ENCODE measurements at regions of chr14 and their contacts with region 1.

Region 1: GRCh38 chr14:63276492-63277342 is 42.0 kb downstream of the GPHB5 start:
- DNase-seq: no peak
- ATAC-seq: no peak
- H3K4me3 ChIP-seq: no peak overlapping the region
- H3K27ac ChIP-seq: no peak overlapping the region
- H3K4me1 ChIP-seq: no peaks in the 10 kb centered on the region
- H3K27me3 ChIP-seq: no peaks in the 10 kb centered on the region

Region 2: DNA sequence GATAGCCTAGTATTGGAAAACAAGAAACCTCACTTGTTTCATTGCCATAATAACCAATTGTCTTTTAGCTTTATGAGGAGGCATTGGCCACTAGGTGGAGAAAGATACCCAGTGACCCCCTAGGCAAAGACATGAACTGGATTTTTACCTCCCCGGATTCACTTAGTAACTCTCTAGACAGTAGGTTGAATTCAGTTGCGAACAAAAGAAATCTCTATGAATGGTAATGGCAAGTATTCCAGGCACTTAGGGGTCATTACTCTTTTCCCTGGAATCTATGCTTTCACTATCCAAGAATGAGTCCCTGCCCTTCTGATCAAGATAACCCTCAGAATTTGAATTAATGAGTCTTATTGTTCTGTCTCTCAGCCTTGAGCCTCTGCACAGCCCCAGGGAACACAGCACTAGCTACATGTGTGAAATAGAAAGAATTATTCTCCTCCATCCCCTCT is 101.9 kb before region 1 on chr14:
- intact Hi-C with region 1: loop called (anchors 1 to 2 kb)
- DNase-seq: no peak
- ATAC-seq: peak; percentile 77
- H3K4me3 ChIP-seq: no peak overlapping the region
- H3K27ac ChIP-seq: no peak overlapping the region
- H3K4me1 ChIP-seq: peaks cover 0 to 1% of the 10 kb centered on the region in 2 donors
- H3K27me3 ChIP-seq: no peaks in the 10 kb centered on the region

Region 3: GRCh38 chr14:63426838-63427352 is 150.2 kb after region 1 on chr14:
- intact Hi-C with region 1: no loop called
- DNase-seq: no peak
- ATAC-seq: no peak
- H3K4me3 ChIP-seq: no peak overlapping the region
- H3K27ac ChIP-seq: no peak overlapping the region
- H3K4me1 ChIP-seq: no peaks in the 10 kb centered on the region
- H3K27me3 ChIP-seq: no peaks in the 10 kb centered on the region

Region 4: DNA sequence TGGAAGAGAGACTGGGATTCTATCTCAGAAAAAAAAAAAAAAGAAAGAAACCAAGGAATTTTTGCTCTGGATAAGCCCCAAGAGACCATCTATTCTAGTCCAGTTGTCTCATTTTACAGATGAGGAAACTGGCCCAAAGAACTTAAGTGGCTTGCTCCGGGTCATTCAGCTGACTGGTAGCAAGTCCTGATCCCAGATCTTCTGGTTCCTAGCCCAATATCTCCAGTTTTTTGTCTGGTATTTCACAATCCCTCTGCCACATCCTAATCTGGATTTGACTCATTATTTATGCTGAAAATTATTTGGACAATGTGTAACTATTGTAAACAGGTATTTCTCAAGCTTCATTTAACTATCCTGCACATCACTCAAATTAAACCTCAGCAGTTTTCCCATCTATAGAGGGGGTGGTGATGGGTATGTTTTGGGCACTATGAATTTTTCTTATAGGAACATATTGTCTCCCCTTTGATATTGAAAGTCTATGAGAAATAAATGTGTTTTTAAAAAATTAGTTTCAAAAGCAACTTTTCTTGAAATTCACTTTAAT is 223.1 kb after region 1 on chr14:
- intact Hi-C with region 1: no loop called
- DNase-seq: no peak
- ATAC-seq: peak; percentile 80
- H3K4me3 ChIP-seq: no peak overlapping the region
- H3K27ac ChIP-seq: no peak overlapping the region
- H3K4me1 ChIP-seq: peaks cover 2 to 11% of the 10 kb centered on the region in 2 donors
- H3K27me3 ChIP-seq: no peaks in the 10 kb centered on the region